ENCODE measurements at regions of chr9 and their contacts with region 1.

Region 1: GRCh38 chr9:33178971-33179697 is 12.0 kb upstream of the B4GALT1 start:
- DNase-seq: no peak
- H3K4me3 ChIP-seq: no peak overlapping the region
- H3K27ac ChIP-seq: no peak overlapping the region
- H3K4me1 ChIP-seq: no peaks in the 10 kb centered on the region
- H3K27me3 ChIP-seq: no peaks in the 10 kb centered on the region
- CTCF ChIP-seq: no peak

Region 2: GRCh38 chr9:32843295-32843694 is 335.8 kb before region 1 on chr9:
- CTCF ChIA-PET with region 1: no interaction called
- POLR2A ChIA-PET with region 1: no interaction called
- intact Hi-C with region 1: no loop called
- DNase-seq: no peak
- H3K4me3 ChIP-seq: no peak overlapping the region
- H3K27ac ChIP-seq: no peak overlapping the region
- H3K4me1 ChIP-seq: no peaks in the 10 kb centered on the region
- H3K27me3 ChIP-seq: no peaks in the 10 kb centered on the region
- CTCF ChIP-seq: no peak

Region 3: DNA sequence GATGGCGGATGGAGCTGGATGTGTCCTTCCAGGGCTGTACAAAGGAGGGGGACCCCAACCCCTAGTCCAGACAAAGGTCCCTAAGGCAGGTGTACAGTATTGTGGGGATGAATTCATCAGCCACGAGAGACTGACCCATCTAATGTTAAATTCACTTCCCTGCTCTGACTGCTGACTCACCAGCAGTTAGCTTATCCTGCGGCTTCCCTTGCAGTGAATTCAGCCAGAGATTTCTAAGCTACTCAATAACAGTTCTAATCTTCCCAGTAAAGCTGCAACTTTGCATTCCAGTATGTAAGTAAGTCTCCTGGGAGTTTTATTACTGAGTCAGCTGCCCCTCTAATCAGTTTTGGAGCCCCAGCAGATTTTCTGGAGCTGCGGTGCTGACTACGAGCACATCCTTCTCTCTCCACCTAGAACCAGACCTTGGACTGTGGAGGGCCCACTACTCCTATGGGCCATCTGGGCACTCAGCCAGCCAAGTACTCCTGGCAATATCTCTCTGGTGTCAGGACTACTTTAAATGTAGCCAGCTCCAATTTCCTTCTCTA is 28.1 kb before region 1 on chr9:
- CTCF ChIA-PET with region 1: interaction called, 10 read pairs
- POLR2A ChIA-PET with region 1: no interaction called
- intact Hi-C with region 1: no loop called
- DNase-seq: peak; percentile 93
- H3K4me3 ChIP-seq: peak overlapping the region; percentile 29
- H3K27ac ChIP-seq: peak overlapping the region; percentile 88
- H3K4me1 ChIP-seq: peaks cover 34% of the 10 kb centered on the region
- H3K27me3 ChIP-seq: no peaks in the 10 kb centered on the region
- CTCF ChIP-seq: no peak

Region 4: GRCh38 chr9:33249087-33249657 is 70.0 kb after region 1 on chr9:
- CTCF ChIA-PET with region 1: no interaction called
- POLR2A ChIA-PET with region 1: no interaction called
- intact Hi-C with region 1: no loop called
- DNase-seq: no peak
- H3K4me3 ChIP-seq: no peak overlapping the region
- H3K27ac ChIP-seq: no peak overlapping the region
- H3K4me1 ChIP-seq: no peaks in the 10 kb centered on the region
- H3K27me3 ChIP-seq: no peaks in the 10 kb centered on the region
- CTCF ChIP-seq: no peak

Measured in A673 (cell line).